ENCODE measurements at regions of chr18 and their contacts with region 1.

Region 1: GRCh38 chr18:37445368-37445767 is 120.2 kb downstream of the CELF4 start:
- DNase-seq: no peak
- H3K4me3 ChIP-seq: no peak overlapping the region
- H3K27ac ChIP-seq: no peak overlapping the region
- H3K4me1 ChIP-seq: peaks cover 0 to 16% (median 10%) of the 10 kb centered on the region in 4 experiments; a peak in 6 of 7 replicates
- H3K27me3 ChIP-seq: no peaks in the 10 kb centered on the region
- CTCF ChIP-seq: no peak
- EP300 ChIP-seq: no peak
- POLR2A ChIP-seq: no peak
- RAD21 ChIP-seq: no peak

Region 2: DNA sequence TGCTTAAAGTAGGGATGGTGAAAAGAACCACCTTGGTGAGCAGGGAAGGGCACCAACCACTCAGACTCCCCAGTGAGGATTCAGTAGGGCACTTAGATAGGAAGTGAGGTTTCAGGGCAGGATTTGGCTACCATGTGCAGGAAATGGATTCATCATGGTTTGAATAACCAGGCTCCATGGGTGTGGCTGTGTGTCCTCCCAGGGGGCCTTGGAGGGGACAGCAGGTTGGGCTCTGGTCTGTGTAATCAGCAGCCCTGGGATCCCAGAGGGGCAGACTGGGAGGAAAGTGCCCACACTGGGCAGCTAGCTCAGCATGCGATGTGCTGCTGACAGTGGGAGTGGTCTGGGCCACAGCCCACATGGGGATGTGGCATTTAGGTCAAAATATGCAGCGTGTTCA is 104.4 kb before region 1 on chr18:
- CTCF ChIA-PET with region 1: interaction called, 16 read pairs
- POLR2A ChIA-PET with region 1: no interaction called
- DNase-seq: no peak
- H3K4me3 ChIP-seq: no peak overlapping the region
- H3K27ac ChIP-seq: no peak overlapping the region
- H3K4me1 ChIP-seq: peaks cover 0 to 4% (median 2%) of the 10 kb centered on the region in 4 experiments; a peak in 4 of 7 replicates
- H3K27me3 ChIP-seq: peaks cover 0 to 8% (median 0%) of the 10 kb centered on the region in 4 experiments; a peak in 1 of 7 replicates
- CTCF ChIP-seq: no peak
- EP300 ChIP-seq: no peak
- POLR2A ChIP-seq: no peak
- RAD21 ChIP-seq: no peak

Region 3: DNA sequence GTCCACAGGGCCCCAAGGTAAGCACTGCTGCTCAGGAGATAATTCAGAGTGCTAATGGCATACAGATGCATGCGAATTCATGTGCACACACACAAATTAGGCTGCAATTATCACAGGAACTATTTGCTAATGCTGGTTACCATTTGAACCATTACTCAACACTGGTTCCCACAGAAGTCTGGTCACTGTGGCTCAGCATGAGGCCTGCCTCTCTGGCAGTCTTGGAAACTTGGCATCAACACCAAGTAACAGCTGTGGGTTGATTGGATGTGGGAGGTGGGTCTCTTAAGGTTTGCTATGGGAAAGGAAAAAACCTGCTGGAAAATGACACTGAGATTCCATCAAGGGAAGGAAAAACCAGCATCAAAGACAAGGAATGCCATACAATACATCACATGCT is 15.2 kb after region 1 on chr18:
- CTCF ChIA-PET with region 1: interaction called, 43 read pairs
- POLR2A ChIA-PET with region 1: no interaction called
- DNase-seq: no peak
- H3K4me3 ChIP-seq: no peak overlapping the region
- H3K27ac ChIP-seq: no peak overlapping the region
- H3K4me1 ChIP-seq: no peaks in the 10 kb centered on the region; a peak in 1 of 7 replicates
- H3K27me3 ChIP-seq: no peaks in the 10 kb centered on the region; a peak in 2 of 7 replicates
- CTCF ChIP-seq: no peak
- EP300 ChIP-seq: no peak
- POLR2A ChIP-seq: no peak
- RAD21 ChIP-seq: no peak

Region 4: GRCh38 chr18:37465958-37466357 is 20.6 kb after region 1 on chr18:
- CTCF ChIA-PET with region 1: interaction called, 144 read pairs
- POLR2A ChIA-PET with region 1: no interaction called
- DNase-seq: no peak
- H3K4me3 ChIP-seq: no peak overlapping the region
- H3K27ac ChIP-seq: no peak overlapping the region
- H3K4me1 ChIP-seq: no peaks in the 10 kb centered on the region; a peak in 1 of 7 replicates
- H3K27me3 ChIP-seq: no peaks in the 10 kb centered on the region
- CTCF ChIP-seq: no peak
- EP300 ChIP-seq: no peak
- POLR2A ChIP-seq: no peak
- RAD21 ChIP-seq: no peak

Region 5: GRCh38 chr18:37484983-37485834 is 39.8 kb after region 1 on chr18:
- CTCF ChIA-PET with region 1: interaction called, 42 read pairs
- POLR2A ChIA-PET with region 1: interaction called, 3 read pairs
- DNase-seq: peak; percentile 43 to 77
- H3K4me3 ChIP-seq: peak overlapping the region; percentile 7 to 60 (median 36); a peak in 7 of 8 replicates
- H3K27ac ChIP-seq: no peak overlapping the region
- H3K4me1 ChIP-seq: peaks cover 3 to 33% (median 21%) of the 10 kb centered on the region in 4 experiments
- H3K27me3 ChIP-seq: peaks cover 0 to 34% (median 24%) of the 10 kb centered on the region in 4 experiments; a peak in 6 of 7 replicates
- CTCF ChIP-seq: peak; percentile 57 to 79 (median 66)
- EP300 ChIP-seq: no peak
- POLR2A ChIP-seq: no peak
- RAD21 ChIP-seq: peak in 1 of 2 experiments; percentile 43; a peak in 2 of 4 replicates

Region 6: DNA sequence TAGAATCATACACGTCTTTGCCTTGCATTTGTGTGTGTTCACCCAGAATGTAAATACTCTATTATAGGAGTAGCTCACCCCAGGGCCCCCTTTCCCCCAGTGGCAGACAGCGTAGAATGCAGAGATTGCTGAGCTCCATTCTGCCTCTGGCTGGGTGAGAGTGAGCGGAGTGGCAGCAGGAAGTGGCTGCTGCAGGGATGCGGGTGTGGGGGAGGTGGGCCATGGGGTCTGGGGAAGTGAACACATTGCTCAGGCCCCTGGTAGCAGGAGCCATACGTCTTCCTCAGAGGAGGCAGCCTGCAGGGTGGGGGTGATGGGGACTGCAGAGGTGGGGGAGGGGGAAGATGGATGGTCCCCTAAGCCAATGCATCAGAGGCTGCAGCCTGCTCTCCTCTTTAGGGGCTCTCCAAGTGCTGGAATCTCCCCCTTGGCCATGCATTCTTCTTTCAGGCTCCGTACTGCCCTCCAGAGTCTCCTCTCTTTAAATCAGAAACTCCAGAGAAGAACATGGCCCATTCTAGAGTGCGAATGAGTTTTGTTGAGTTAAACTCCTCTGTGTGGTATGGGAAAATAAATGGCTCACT is 48.1 kb after region 1 on chr18:
- CTCF ChIA-PET with region 1: interaction called, 17 read pairs
- POLR2A ChIA-PET with region 1: interaction called, 3 read pairs
- DNase-seq: no peak
- H3K4me3 ChIP-seq: no peak overlapping the region
- H3K27ac ChIP-seq: no peak overlapping the region
- H3K4me1 ChIP-seq: peaks cover 0 to 29% (median 11%) of the 10 kb centered on the region in 4 experiments; a peak in 6 of 7 replicates
- H3K27me3 ChIP-seq: peaks cover 0 to 3% (median 0%) of the 10 kb centered on the region in 4 experiments; a peak in 4 of 7 replicates
- CTCF ChIP-seq: peak in 1 of 3 experiments; percentile 19; a peak in 1 of 4 replicates
- EP300 ChIP-seq: no peak
- POLR2A ChIP-seq: no peak
- RAD21 ChIP-seq: peak; percentile 11 to 31; a peak in 1 of 4 replicates

Region 7: DNA sequence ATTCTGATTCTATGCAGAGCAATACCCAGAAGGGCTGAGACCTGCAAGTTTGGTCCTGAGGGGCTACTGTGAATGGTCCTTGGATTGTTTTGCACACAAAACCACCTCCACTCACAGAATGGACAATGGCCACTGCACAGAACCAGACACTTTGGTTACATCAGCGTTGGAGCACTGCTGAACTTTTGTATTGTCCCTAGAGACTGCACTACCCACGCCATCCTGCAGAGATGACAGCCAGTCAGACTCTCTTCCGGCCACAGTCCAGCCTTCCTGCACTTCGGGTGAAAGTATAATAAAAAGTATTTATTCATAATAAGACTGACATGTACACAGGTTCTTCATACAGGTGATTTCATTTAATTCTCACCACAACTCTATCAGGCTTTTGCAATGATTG is 84.5 kb after region 1 on chr18:
- CTCF ChIA-PET with region 1: interaction called, 31 read pairs
- POLR2A ChIA-PET with region 1: no interaction called
- DNase-seq: no peak
- H3K4me3 ChIP-seq: no peak overlapping the region
- H3K27ac ChIP-seq: no peak overlapping the region
- H3K4me1 ChIP-seq: peaks cover 7 to 15% (median 9%) of the 10 kb centered on the region in 4 experiments
- H3K27me3 ChIP-seq: peaks cover 0 to 4% (median under 1%) of the 10 kb centered on the region in 4 experiments; a peak in 5 of 7 replicates
- CTCF ChIP-seq: no peak
- EP300 ChIP-seq: no peak
- POLR2A ChIP-seq: no peak
- RAD21 ChIP-seq: no peak